ENCODE measurements at regions of chr12 and their contacts with region 1.

Region 1: GRCh38 chr12:71178162-71178561 is 20.4 kb upstream of the TSPAN8 start:
- DNase-seq: no peak
- H3K4me3 ChIP-seq: no peak overlapping the region
- H3K27ac ChIP-seq: no peak overlapping the region
- H3K4me1 ChIP-seq: no peaks in the 10 kb centered on the region
- H3K27me3 ChIP-seq: no peaks in the 10 kb centered on the region
- CTCF ChIP-seq: no peak
- EP300 ChIP-seq: no peak
- POLR2A ChIP-seq: no peak

Region 2: GRCh38 chr12:70581208-70581607 is 597.0 kb before region 1 on chr12:
- in situ Hi-C with region 1: no loop called
- intact Hi-C with region 1: no loop called
- DNase-seq: no peak
- H3K4me3 ChIP-seq: no peak overlapping the region
- H3K27ac ChIP-seq: no peak overlapping the region
- H3K4me1 ChIP-seq: peaks cover 0 to 2% (median 0%) of the 10 kb centered on the region in 4 donors
- H3K27me3 ChIP-seq: no peaks in the 10 kb centered on the region
- CTCF ChIP-seq: no peak
- EP300 ChIP-seq: no peak
- POLR2A ChIP-seq: no peak

Region 3: DNA sequence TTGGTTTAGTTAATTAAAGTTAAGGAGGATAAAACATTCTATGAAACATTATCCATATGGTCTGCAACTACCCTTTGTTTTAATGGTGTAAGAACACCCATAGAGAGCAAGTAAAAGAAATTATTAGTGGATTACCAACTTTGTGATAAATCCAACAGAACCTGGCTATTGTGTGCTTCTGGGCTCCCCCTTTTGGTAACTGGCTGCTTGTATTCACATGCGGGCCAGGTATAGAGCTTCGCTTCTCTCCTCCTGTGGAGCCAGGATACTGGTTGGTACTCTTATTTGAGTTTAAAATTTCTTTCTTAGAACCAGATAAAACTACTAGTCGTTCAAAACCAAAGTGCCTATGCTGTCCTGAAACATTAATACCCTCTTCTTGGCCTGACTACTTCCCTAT is 338.6 kb before region 1 on chr12:
- in situ Hi-C with region 1: no loop called
- intact Hi-C with region 1: no loop called
- DNase-seq: no peak
- H3K4me3 ChIP-seq: no peak overlapping the region
- H3K27ac ChIP-seq: no peak overlapping the region
- H3K4me1 ChIP-seq: no peaks in the 10 kb centered on the region
- H3K27me3 ChIP-seq: no peaks in the 10 kb centered on the region
- CTCF ChIP-seq: no peak
- EP300 ChIP-seq: no peak
- POLR2A ChIP-seq: no peak

Region 4: GRCh38 chr12:71141378-71141926 is 36.7 kb before region 1 on chr12:
- in situ Hi-C with region 1: no loop called
- intact Hi-C with region 1: no loop called
- DNase-seq: no peak
- H3K4me3 ChIP-seq: no peak overlapping the region
- H3K27ac ChIP-seq: peak overlapping the region in 3 of 4 donors; percentile 20 to 38 (median 36)
- H3K4me1 ChIP-seq: peaks cover 0 to 53% (median 19%) of the 10 kb centered on the region in 4 donors
- H3K27me3 ChIP-seq: no peaks in the 10 kb centered on the region
- CTCF ChIP-seq: no peak
- EP300 ChIP-seq: no peak
- POLR2A ChIP-seq: no peak

Region 5: DNA sequence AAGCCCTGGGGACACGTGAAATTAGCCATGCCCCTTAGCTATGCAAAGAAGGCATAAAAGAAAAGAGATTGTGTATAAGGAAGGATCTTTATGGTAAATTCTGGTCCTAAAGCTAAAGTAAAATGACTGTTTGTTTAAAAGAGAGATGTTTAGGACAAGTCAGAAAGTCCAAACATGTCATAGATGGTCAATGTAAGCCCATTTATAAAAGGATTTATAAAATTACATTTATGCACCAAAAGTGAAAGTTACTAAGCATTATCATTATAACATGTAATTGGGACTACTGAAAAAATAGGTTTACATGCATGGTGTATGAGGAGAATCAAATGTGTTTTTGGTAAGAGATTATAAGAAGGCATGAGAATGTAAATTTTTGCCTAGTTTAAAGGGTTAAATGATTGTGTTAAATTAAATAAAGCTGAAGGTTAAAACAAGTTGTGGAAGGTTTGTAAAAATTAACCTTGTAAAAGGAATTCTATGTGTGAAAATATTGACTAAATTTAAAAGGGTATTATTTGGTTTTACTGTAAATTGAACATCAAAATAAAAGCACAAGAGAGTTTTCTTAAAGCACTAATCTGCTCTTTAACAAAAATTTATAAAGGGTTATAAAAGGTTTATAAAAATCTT is 30.0 kb after region 1 on chr12:
- in situ Hi-C with region 1: no loop called
- intact Hi-C with region 1: loop called (anchors 1 kb)
- DNase-seq: no peak
- H3K4me3 ChIP-seq: no peak overlapping the region
- H3K27ac ChIP-seq: no peak overlapping the region
- H3K4me1 ChIP-seq: peaks cover 0 to 8% (median 3%) of the 10 kb centered on the region in 4 donors
- H3K27me3 ChIP-seq: no peaks in the 10 kb centered on the region
- CTCF ChIP-seq: no peak
- EP300 ChIP-seq: no peak
- POLR2A ChIP-seq: no peak

Measured in transverse colon (tissue), 4 donors.